Caco-2 (cell line): ENCODE measurements at regions of chr17 and their contacts with region 1.

Region 1: DNA sequence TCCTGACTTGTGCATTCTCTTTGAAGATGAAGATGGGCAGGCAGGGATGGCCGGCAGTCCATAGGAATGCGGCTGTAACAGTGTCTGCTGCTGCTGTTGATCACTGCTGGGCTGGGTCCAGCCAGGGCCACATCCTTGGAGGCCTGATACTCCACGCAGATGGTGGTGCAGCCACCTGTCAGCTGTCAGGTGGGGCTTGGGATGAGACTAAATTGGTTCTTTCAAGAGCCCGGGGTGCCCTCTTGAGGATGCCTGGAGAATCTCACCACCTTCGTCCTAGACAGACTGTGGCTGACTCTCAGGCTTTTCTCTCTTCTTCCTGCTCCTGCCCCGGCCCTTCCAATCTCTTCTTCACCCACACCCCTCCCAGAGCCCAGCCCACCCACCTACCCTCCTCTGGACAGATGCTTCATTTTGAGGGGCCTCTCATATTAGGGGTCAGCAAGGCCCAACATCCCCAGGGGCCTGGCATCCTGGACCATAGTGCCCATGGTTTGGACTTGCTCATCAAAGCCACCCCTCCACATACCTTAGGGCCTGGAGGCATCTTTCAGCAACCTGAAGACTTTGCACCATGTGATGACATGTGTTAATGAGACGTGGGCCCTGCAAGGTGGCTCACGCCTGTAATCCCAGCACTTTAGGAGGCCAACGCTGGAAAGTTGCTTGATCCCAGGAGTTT is 19.1 kb downstream of the OSBPL7 start:
- DNase-seq: peak; percentile 91
- H3K4me3 ChIP-seq: no peak overlapping the region
- H3K4me3 Mint-ChIP-seq: no peak overlapping the region
- H3K27ac Mint-ChIP-seq: no peak overlapping the region
- H3K4me1 ChIP-seq: no peaks in the 10 kb centered on the region
- H3K4me1 Mint-ChIP-seq: peaks cover under 1% of the 10 kb centered on the region
- H3K27me3 ChIP-seq: no peaks in the 10 kb centered on the region
- H3K27me3 Mint-ChIP-seq: peaks cover 3% of the 10 kb centered on the region
- CTCF ChIP-seq: peak; percentile 96 to 98

Region 2: GRCh38 chr17:47733047-47733673 is 69.3 kb before region 1 on chr17 and contains the start of gene TBX21:
- CTCF ChIA-PET with region 1: interaction called, 19 read pairs
- POLR2A ChIA-PET with region 1: no interaction called
- intact Hi-C with region 1: loop called (anchors 1 kb)
- DNase-seq: peak; percentile 93 to 94
- H3K4me3 ChIP-seq: peak within 1 kb of the TSS; percentile 37
- H3K4me3 Mint-ChIP-seq: peak within 1 kb of the TSS; percentile 68
- H3K27ac Mint-ChIP-seq: no peak within 1 kb of the TSS
- H3K4me1 ChIP-seq: peaks cover 9% of the 10 kb centered on the region
- H3K4me1 Mint-ChIP-seq: peaks cover 7% of the 10 kb centered on the region
- H3K27me3 ChIP-seq: peaks cover 18% of the 10 kb centered on the region
- H3K27me3 Mint-ChIP-seq: peaks cover 45% of the 10 kb centered on the region
- CTCF ChIP-seq: peak; percentile 55 to 89
- total RNA-seq, gene TBX21: not detected in 2 replicates

Region 3: GRCh38 chr17:47776330-47777197 is 25.9 kb before region 1 on chr17:
- CTCF ChIA-PET with region 1: interaction called, 5 read pairs
- POLR2A ChIA-PET with region 1: no interaction called
- intact Hi-C with region 1: loop called (anchors 1 kb)
- DNase-seq: peak; percentile 60 to 79
- H3K4me3 ChIP-seq: no peak overlapping the region
- H3K4me3 Mint-ChIP-seq: no peak overlapping the region
- H3K27ac Mint-ChIP-seq: no peak overlapping the region
- H3K4me1 ChIP-seq: no peaks in the 10 kb centered on the region
- H3K4me1 Mint-ChIP-seq: no peaks in the 10 kb centered on the region
- H3K27me3 ChIP-seq: no peaks in the 10 kb centered on the region
- H3K27me3 Mint-ChIP-seq: peaks cover 28% of the 10 kb centered on the region
- CTCF ChIP-seq: peak; percentile 94 to 99